T-cell (primary cell): ENCODE measurements at regions of chr18 and their contacts with region 1.

Region 1: GRCh38 chr18:50982802-50983179 is 15.0 kb downstream of the ELAC1 start:
- DNase-seq: no peak
- ATAC-seq: no peak
- H3K4me3 ChIP-seq: no peak overlapping the region
- H3K4me3 Mint-ChIP-seq: no peak overlapping the region
- H3K27ac ChIP-seq: no peak overlapping the region
- H3K27ac Mint-ChIP-seq: no peak overlapping the region
- H3K4me1 ChIP-seq: no peaks in the 10 kb centered on the region
- H3K4me1 Mint-ChIP-seq: peaks cover 4 to 7% (median 6%) of the 10 kb centered on the region in 3 donors
- H3K27me3 ChIP-seq: no peaks in the 10 kb centered on the region
- H3K27me3 Mint-ChIP-seq: no peaks in the 10 kb centered on the region

Region 2: GRCh38 chr18:50947899-50948298 is 34.9 kb before region 1 on chr18:
- CTCF ChIA-PET with region 1: no interaction called
- POLR2A ChIA-PET with region 1: interaction called in 1 of 2 experiments, 11 read pairs
- DNase-seq: no peak
- ATAC-seq: no peak
- H3K4me3 ChIP-seq: no peak overlapping the region
- H3K4me3 Mint-ChIP-seq: no peak overlapping the region
- H3K27ac ChIP-seq: no peak overlapping the region
- H3K27ac Mint-ChIP-seq: no peak overlapping the region
- H3K4me1 ChIP-seq: no peaks in the 10 kb centered on the region
- H3K4me1 Mint-ChIP-seq: no peaks in the 10 kb centered on the region
- H3K27me3 ChIP-seq: no peaks in the 10 kb centered on the region
- H3K27me3 Mint-ChIP-seq: no peaks in the 10 kb centered on the region

Region 3: DNA sequence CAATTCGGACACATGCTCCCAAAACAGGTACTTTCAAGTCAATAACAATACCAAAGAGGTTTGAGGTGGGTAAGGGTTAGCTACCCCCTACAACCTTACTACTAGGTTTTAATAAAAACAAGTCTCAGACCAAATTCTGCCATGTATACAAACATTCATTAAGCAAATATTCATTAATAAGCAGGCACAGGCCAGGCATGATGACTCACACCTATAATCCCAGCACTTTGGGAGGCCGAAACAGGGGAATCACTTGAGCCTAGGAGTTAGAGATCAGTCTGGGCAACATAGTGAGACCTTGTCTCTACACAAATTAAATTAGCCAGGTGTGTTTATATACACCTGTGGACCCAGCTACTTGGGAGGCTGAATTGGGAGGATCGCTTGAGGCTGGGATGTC is 26.7 kb before region 1 on chr18:
- CTCF ChIA-PET with region 1: no interaction called
- POLR2A ChIA-PET with region 1: interaction called, 10 to 11 read pairs
- DNase-seq: no peak
- ATAC-seq: no peak
- H3K4me3 ChIP-seq: no peak overlapping the region
- H3K4me3 Mint-ChIP-seq: no peak overlapping the region
- H3K27ac ChIP-seq: no peak overlapping the region
- H3K27ac Mint-ChIP-seq: no peak overlapping the region
- H3K4me1 ChIP-seq: no peaks in the 10 kb centered on the region
- H3K4me1 Mint-ChIP-seq: no peaks in the 10 kb centered on the region
- H3K27me3 ChIP-seq: peaks cover 0 to 2% of the 10 kb centered on the region in 2 experiments
- H3K27me3 Mint-ChIP-seq: peaks cover 0 to 1% of the 10 kb centered on the region in 2 donors